CD8-positive, alpha-beta T cell (primary cell): ENCODE measurements at regions of chr16 and their contacts with region 1.

Region 1: DNA sequence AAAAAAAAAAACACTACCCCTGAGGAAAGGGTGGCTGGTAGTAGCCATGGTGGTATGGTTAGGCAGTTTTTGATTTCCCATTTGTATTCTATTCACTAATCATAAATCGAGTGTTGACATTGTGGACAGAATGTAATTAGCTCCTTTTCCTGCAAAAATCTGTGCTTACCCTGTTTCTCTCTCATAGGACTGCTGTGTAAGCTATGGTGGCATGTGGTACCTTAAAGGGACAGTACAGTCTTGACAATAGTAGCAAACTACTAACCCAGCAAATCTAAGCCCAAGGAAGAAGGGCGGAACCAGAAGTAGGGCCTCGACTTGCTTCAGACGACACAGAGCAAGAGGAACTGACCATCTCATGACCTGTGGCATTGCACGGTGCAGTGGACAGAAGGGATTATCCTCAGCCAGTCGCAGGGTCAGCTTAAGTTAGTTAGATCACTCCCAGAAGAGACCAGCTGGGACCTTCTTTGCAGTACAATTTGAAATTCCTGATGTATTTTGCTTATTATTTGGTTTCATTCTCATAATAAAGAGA is 36.3 kb downstream of the POLR3E start:
- DNase-seq: no peak
- ATAC-seq: no peak
- H3K4me3 ChIP-seq: no peak overlapping the region
- H3K4me3 Mint-ChIP-seq: no peak overlapping the region
- H3K27ac ChIP-seq: no peak overlapping the region
- H3K27ac Mint-ChIP-seq: peak overlapping the region; percentile 27
- H3K4me1 ChIP-seq: no peaks in the 10 kb centered on the region
- H3K4me1 Mint-ChIP-seq: peaks cover 26% of the 10 kb centered on the region
- H3K27me3 ChIP-seq: no peaks in the 10 kb centered on the region
- H3K27me3 Mint-ChIP-seq: no peaks in the 10 kb centered on the region
- CTCF ChIP-seq: no peak

Region 2: GRCh38 chr16:22220069-22220440 is 113.5 kb before region 1 on chr16:
- CTCF ChIA-PET with region 1: no interaction called
- POLR2A ChIA-PET with region 1: no interaction called
- intact Hi-C with region 1: no loop called
- DNase-seq: no peak
- ATAC-seq: no peak
- H3K4me3 ChIP-seq: no peak overlapping the region
- H3K4me3 Mint-ChIP-seq: no peak overlapping the region
- H3K27ac ChIP-seq: no peak overlapping the region
- H3K27ac Mint-ChIP-seq: no peak overlapping the region
- H3K4me1 ChIP-seq: no peaks in the 10 kb centered on the region
- H3K4me1 Mint-ChIP-seq: peaks cover 8% of the 10 kb centered on the region
- H3K27me3 ChIP-seq: no peaks in the 10 kb centered on the region
- H3K27me3 Mint-ChIP-seq: no peaks in the 10 kb centered on the region
- CTCF ChIP-seq: no peak

Region 3: DNA sequence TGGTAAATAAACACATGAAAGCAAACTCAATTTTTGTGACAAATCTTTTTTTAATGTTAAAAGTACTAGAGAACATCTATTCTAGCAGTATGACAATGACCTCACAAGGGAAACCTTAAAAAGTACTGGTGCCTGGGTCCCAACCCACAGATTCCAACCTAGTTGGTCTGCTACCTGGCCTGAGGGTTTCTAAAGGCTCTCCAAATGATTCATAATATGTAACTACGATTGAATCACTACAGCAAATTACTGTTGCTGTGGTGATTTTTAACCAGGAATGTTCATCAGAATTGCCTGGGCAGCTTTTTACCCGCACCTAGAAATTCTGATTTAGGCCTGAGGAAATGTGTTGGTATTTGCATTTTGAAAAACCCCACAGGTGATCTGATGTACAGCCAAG is 14.8 kb after region 1 on chr16:
- CTCF ChIA-PET with region 1: interaction called, 4 read pairs
- POLR2A ChIA-PET with region 1: interaction called, 6 read pairs
- intact Hi-C with region 1: loop called in 1 of 2 experiments (anchors 2 kb)
- DNase-seq: no peak
- ATAC-seq: no peak
- H3K4me3 ChIP-seq: no peak overlapping the region
- H3K4me3 Mint-ChIP-seq: no peak overlapping the region
- H3K27ac ChIP-seq: no peak overlapping the region
- H3K27ac Mint-ChIP-seq: no peak overlapping the region
- H3K4me1 ChIP-seq: peaks cover 11% of the 10 kb centered on the region
- H3K4me1 Mint-ChIP-seq: peaks cover 27% of the 10 kb centered on the region
- H3K27me3 ChIP-seq: no peaks in the 10 kb centered on the region
- H3K27me3 Mint-ChIP-seq: no peaks in the 10 kb centered on the region
- CTCF ChIP-seq: no peak

Region 4: GRCh38 chr16:22369221-22369811 is 35.8 kb after region 1 on chr16:
- CTCF ChIA-PET with region 1: interaction called, 4 read pairs
- POLR2A ChIA-PET with region 1: interaction called, 5 read pairs
- intact Hi-C with region 1: loop called in 1 of 2 experiments (anchors 2 kb)
- DNase-seq: peak in 2 of 9 experiments; percentile 32 to 62
- ATAC-seq: no peak
- H3K4me3 ChIP-seq: no peak overlapping the region
- H3K4me3 Mint-ChIP-seq: peak overlapping the region; percentile 27
- H3K27ac ChIP-seq: peak overlapping the region; percentile 9 to 39
- H3K27ac Mint-ChIP-seq: peak overlapping the region; percentile 81
- H3K4me1 ChIP-seq: peaks cover 71% of the 10 kb centered on the region
- H3K4me1 Mint-ChIP-seq: peaks cover 86% of the 10 kb centered on the region
- H3K27me3 ChIP-seq: no peaks in the 10 kb centered on the region
- H3K27me3 Mint-ChIP-seq: no peaks in the 10 kb centered on the region
- CTCF ChIP-seq: no peak

Region 5: GRCh38 chr16:22417019-22417418 is 83.5 kb after region 1 on chr16:
- CTCF ChIA-PET with region 1: no interaction called
- POLR2A ChIA-PET with region 1: no interaction called
- intact Hi-C with region 1: loop called in 1 of 2 experiments (anchors 10 kb)
- DNase-seq: no peak
- ATAC-seq: no peak
- H3K4me3 ChIP-seq: no peak overlapping the region
- H3K4me3 Mint-ChIP-seq: no peak overlapping the region
- H3K27ac ChIP-seq: no peak overlapping the region
- H3K27ac Mint-ChIP-seq: no peak overlapping the region
- H3K4me1 ChIP-seq: no peaks in the 10 kb centered on the region
- H3K4me1 Mint-ChIP-seq: no peaks in the 10 kb centered on the region
- H3K27me3 ChIP-seq: no peaks in the 10 kb centered on the region
- H3K27me3 Mint-ChIP-seq: no peaks in the 10 kb centered on the region
- CTCF ChIP-seq: no peak